Activated CD4-positive, alpha-beta T cell treated with anti-CD3 and anti-CD28 coated beads for 36 hours (primary cell): ENCODE measurements at regions of chr9 and their contacts with region 1.

Region 1: GRCh38 chr9:87276327-87276841 is 221.3 kb upstream of the DAPK1 start:
- DNase-seq: no peak
- ATAC-seq: peak; percentile 72
- H3K4me3 Mint-ChIP-seq: no peak overlapping the region
- H3K27ac Mint-ChIP-seq: peak overlapping the region; percentile 64
- H3K4me1 Mint-ChIP-seq: peaks cover 33% of the 10 kb centered on the region
- H3K27me3 Mint-ChIP-seq: peaks cover 12% of the 10 kb centered on the region

Region 2: GRCh38 chr9:87122947-87123685 is 153.3 kb before region 1 on chr9:
- CTCF ChIA-PET with region 1: no interaction called
- POLR2A ChIA-PET with region 1: no interaction called
- intact Hi-C with region 1: loop called (anchors 2 kb)
- DNase-seq: peak; percentile 49
- ATAC-seq: peak; percentile 97
- H3K4me3 Mint-ChIP-seq: peak overlapping the region; percentile 12
- H3K27ac Mint-ChIP-seq: peak overlapping the region; percentile 60
- H3K4me1 Mint-ChIP-seq: peaks cover 15% of the 10 kb centered on the region
- H3K27me3 Mint-ChIP-seq: peaks cover 31% of the 10 kb centered on the region

Region 3: DNA sequence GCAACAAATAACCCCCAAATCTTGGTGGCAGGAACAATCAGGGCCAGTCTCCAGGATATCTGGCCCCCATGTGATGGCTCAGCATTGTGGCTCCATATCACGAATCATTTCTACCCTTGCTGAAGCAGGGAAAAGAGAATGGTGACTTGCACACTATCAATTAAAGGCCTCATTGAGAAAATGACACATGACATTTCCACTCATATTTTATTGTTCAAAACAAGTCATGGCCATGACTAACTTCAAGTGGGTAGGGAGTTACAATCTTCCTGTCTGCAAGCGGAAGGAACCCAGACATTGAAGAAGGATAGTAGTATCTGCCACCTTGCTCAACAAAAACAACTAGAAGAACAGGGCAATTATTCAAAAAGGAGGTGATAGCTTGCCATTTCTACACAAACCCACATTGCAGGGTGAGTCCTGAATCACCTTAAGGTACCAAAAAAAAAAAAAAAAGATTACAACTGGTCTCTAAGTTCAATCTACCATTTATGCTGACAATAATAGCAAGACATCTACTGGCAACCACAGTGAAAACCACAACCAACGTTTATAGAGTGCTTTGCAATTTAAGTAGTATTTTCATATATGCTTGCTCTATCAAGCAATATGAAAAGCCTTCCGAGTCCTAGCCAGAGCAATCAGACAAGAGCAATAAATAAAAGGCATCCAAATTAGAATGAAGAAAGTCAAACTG is 34.6 kb after region 1 on chr9:
- CTCF ChIA-PET with region 1: no interaction called
- POLR2A ChIA-PET with region 1: no interaction called
- intact Hi-C with region 1: loop called in 1 of 2 experiments (anchors 2 kb)
- DNase-seq: no peak
- ATAC-seq: peak; percentile 60
- H3K4me3 Mint-ChIP-seq: no peak overlapping the region
- H3K27ac Mint-ChIP-seq: no peak overlapping the region
- H3K4me1 Mint-ChIP-seq: peaks cover 8% of the 10 kb centered on the region
- H3K27me3 Mint-ChIP-seq: peaks cover 7% of the 10 kb centered on the region